ENCODE measurements at regions of chr16 and their contacts with region 1.

Region 1: DNA sequence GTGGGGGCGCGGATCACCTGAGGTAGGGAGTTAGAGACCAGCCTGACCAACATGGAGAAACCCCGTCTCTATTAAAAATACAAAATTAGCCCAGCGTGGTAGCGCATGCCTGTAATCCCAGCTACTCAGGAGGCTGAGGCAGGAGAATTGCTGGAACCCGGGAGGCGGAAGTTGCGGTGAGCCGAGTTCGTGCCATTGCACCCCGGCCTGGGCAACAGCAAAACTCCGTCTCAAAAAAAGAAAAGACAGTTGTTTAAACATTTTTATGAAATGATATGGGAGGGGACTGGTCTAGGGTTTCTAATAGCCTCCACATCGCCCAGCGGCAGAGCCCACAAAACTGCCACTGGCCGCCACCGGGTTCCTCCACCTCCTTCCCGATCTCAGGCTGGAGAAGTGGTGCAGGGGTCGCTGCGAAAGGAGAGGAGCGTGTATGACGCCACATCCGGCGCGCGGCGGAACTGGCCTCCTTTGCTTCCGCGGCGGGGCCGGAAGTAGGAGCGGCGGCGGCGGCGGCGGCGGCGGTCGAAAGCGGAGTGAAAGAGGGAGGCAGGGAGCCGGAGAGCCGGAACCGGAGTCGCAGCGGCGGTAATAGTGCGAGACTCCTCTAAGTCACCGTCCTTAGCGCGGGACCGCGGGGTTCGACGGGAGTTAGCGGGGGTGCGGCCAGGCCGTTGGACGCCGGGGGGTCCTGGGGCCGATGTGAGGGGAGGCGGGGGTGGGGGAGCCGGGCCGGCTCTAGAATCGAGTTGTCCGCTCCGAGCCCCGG is at the start of gene PPP4C:
- DNase-seq: peak; percentile 95
- H3K4me3 Mint-ChIP-seq: peak within 1 kb of the TSS; percentile 91
- H3K27ac Mint-ChIP-seq: peak within 1 kb of the TSS; percentile 93
- H3K4me1 Mint-ChIP-seq: peaks cover 39% of the 10 kb centered on the region
- H3K27me3 Mint-ChIP-seq: no peaks in the 10 kb centered on the region
- total RNA-seq, gene PPP4C: 121 to 133 TPM

Region 2: DNA sequence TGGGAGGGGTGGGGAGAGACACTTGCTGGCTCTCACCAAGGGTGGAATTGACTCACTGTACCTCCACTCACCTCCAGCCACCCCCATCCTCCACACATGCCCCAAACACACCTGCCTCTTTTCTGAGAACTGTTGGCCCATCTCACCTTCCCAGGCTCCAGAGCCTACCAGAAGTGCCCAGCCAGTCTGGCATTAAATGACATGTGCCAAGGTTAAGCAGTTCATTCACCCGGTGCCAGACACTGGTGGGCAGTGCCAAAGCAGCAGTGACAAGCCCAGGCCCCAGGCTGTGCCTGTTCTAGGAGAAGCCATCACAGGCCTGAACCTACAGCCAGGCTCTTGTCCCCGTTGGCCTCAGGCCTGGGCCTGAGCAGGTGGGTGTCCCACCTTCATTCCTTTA is 244.2 kb before region 1 on chr16:
- CTCF ChIA-PET with region 1: no interaction called
- POLR2A ChIA-PET with region 1: no interaction called
- intact Hi-C with region 1: no loop called
- DNase-seq: no peak
- H3K4me3 Mint-ChIP-seq: no peak overlapping the region
- H3K27ac Mint-ChIP-seq: no peak overlapping the region
- H3K4me1 Mint-ChIP-seq: peaks cover 42% of the 10 kb centered on the region
- H3K27me3 Mint-ChIP-seq: no peaks in the 10 kb centered on the region

Region 3: DNA sequence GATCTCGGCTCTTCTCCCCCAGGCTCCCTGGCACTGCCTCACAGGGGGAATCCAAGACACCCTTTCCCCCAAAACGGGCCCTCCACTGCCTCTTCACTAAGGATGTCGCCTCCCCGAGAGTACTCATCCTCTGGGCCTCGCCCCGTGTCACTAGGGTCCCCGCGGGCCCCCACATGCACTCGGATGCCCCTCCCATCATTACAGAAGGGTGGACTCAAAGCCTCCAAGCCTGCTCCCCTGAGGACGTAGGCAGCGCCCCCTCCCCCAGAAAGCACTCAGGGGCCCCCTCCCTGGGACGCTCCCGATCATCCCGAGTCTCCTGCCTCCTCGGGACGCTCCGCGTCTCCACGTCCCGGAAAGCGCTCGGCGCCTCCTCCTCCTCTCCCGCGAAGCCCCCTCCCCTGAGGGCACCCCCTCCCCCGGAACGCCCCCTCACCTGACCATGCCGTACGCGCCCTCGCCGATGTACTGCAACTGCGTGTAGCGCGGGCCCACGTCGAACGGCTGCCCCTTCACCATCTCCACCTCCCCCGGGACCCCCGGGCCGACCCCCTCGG is 47.0 kb after region 1 on chr16:
- CTCF ChIA-PET with region 1: no interaction called
- POLR2A ChIA-PET with region 1: no interaction called
- intact Hi-C with region 1: loop called (anchors 5 kb)
- DNase-seq: peak; percentile 35
- H3K4me3 Mint-ChIP-seq: peak overlapping the region; percentile 87
- H3K27ac Mint-ChIP-seq: peak overlapping the region; percentile 85
- H3K4me1 Mint-ChIP-seq: peaks cover 18% of the 10 kb centered on the region
- H3K27me3 Mint-ChIP-seq: no peaks in the 10 kb centered on the region